Activated naive CD4-positive, alpha-beta T cell treated with anti-CD3 and anti-CD28 coated beads for 36 hours (primary cell): ENCODE measurements at regions of chr10 and their contacts with region 1.

Region 1: DNA sequence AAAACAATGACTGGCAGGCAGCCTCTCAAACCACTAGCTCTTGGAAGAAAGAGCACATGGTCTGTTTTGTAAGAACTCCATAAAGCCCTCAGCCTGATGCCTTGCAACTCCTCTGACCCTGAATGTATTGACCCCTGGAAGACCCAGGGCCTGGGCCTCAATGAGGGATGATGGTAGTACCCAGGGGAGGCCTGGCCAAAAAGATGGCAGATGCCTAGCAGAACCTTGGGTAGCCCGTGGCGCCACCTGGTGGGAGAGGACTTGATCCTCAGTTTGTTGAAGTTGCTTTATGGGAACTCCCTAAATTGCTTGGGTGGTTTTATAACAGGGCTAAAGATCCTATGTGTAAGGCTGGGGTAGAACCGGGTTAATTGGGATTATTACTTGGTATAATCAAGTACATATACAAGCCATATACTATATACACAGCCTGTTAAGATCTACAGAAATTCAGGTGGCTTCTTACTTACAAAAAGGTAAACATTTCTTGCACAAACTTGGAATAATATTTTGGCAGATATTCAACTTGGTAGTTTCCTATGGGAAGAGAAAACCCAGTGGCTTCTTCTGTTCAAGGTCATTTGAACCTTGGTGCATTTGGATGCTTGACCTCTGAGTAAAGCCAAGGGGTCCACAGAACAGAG is 95.8 kb upstream of the CACUL1 start:
- DNase-seq: peak; percentile 93
- H3K4me3 Mint-ChIP-seq: no peak overlapping the region
- H3K27ac Mint-ChIP-seq: no peak overlapping the region
- H3K4me1 Mint-ChIP-seq: no peaks in the 10 kb centered on the region
- H3K27me3 Mint-ChIP-seq: peaks cover 2% of the 10 kb centered on the region

Region 2: DNA sequence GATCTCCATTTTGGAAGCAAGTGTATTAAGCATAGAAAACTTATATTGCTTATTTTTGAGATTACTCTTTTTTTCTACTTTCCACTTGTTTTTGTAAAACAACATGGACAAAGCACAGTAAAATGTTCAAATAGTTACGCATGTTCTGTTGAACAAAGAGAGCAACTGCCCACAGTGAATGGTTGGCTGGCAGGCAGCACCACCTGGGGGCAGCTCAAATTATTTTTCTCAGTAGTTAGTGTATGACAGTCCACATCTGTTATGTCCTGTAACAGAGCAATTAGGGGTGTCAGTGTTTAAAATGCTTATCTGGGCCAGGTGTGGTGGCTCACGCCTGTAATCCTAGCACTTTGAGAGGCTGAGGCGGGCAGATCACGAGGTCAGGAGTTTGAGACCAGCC is 49.6 kb before region 1 on chr10:
- CTCF ChIA-PET with region 1: no interaction called
- intact Hi-C with region 1: loop called (anchors 5 kb)
- DNase-seq: peak; percentile 46
- H3K4me3 Mint-ChIP-seq: no peak overlapping the region
- H3K27ac Mint-ChIP-seq: no peak overlapping the region
- H3K4me1 Mint-ChIP-seq: peaks cover 3% of the 10 kb centered on the region
- H3K27me3 Mint-ChIP-seq: peaks cover 6% of the 10 kb centered on the region